ENCODE measurements at regions of chr7 and their contacts with region 1.

Region 1: GRCh38 chr7:79298145-79298760 is 155.2 kb downstream of the MAGI2 start:
- H3K4me3 ChIP-seq: no peak overlapping the region
- H3K27ac ChIP-seq: no peak overlapping the region
- H3K4me1 ChIP-seq: no peaks in the 10 kb centered on the region
- CTCF ChIP-seq: no peak

Region 2: GRCh38 chr7:79245623-79246249 is 52.5 kb before region 1 on chr7:
- CTCF ChIA-PET with region 1: interaction called, 12 read pairs
- POLR2A ChIA-PET with region 1: no interaction called
- H3K4me3 ChIP-seq: no peak overlapping the region
- H3K27ac ChIP-seq: no peak overlapping the region
- H3K4me1 ChIP-seq: no peaks in the 10 kb centered on the region
- CTCF ChIP-seq: no peak

Region 3: DNA sequence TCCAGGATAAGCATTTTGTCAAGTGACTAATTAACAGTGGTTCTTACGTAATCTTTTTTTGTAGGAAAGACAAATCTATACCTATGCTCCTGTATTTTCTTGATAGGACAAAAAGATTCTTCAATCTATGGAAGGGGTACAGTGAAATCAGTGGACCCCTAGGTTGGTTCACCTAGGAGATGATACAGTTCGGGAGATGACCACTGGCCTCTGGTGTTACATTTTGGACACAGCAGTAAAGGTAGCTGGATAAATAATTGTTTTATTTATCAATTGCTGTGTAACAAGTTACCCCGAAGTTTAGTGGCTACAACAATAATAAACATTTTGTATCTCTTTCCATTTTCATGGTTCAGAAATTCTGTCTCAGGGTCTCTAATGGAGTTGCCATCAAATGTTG is 443.4 kb after region 1 on chr7:
- CTCF ChIA-PET with region 1: interaction called, 18 read pairs
- POLR2A ChIA-PET with region 1: no interaction called
- H3K4me3 ChIP-seq: no peak overlapping the region
- H3K27ac ChIP-seq: no peak overlapping the region
- H3K4me1 ChIP-seq: no peaks in the 10 kb centered on the region; the same call in 1 of the 2 replicates
- CTCF ChIP-seq: no peak

Region 4: GRCh38 chr7:80047856-80048459 is 749.7 kb after region 1 on chr7:
- CTCF ChIA-PET with region 1: interaction called, 14 read pairs
- POLR2A ChIA-PET with region 1: no interaction called
- H3K4me3 ChIP-seq: no peak overlapping the region
- H3K27ac ChIP-seq: no peak overlapping the region
- H3K4me1 ChIP-seq: no peaks in the 10 kb centered on the region
- CTCF ChIP-seq: no peak

Measured in HEK293 (cell line).